Dendritic cell treated with granulocyte-macrophage colony-stimulating factor and Interleukin-4, amounts not matched to agents 40 ng/mL and 50 ng/mL, for 4 days (primary cell): ENCODE measurements at regions of chr1 and their contacts with region 1.

Region 1: GRCh38 chr1:155050560-155051341 is at the start of gene ADAM15:
- H3K4me3 Mint-ChIP-seq: peak within 1 kb of the TSS; percentile 87
- H3K27ac Mint-ChIP-seq: peak within 1 kb of the TSS; percentile 90
- H3K4me1 Mint-ChIP-seq: peaks cover 37% of the 10 kb centered on the region
- H3K27me3 Mint-ChIP-seq: peaks cover 3% of the 10 kb centered on the region

Region 2: GRCh38 chr1:154206196-154206595 is 844.6 kb before region 1 on chr1 and contains the start of gene CFAP141:
- intact Hi-C with region 1: no loop called
- H3K4me3 Mint-ChIP-seq: no peak within 1 kb of the TSS
- H3K27ac Mint-ChIP-seq: peak within 1 kb of the TSS; percentile 44
- H3K4me1 Mint-ChIP-seq: no peaks in the 10 kb centered on the region
- H3K27me3 Mint-ChIP-seq: no peaks in the 10 kb centered on the region

Region 3: DNA sequence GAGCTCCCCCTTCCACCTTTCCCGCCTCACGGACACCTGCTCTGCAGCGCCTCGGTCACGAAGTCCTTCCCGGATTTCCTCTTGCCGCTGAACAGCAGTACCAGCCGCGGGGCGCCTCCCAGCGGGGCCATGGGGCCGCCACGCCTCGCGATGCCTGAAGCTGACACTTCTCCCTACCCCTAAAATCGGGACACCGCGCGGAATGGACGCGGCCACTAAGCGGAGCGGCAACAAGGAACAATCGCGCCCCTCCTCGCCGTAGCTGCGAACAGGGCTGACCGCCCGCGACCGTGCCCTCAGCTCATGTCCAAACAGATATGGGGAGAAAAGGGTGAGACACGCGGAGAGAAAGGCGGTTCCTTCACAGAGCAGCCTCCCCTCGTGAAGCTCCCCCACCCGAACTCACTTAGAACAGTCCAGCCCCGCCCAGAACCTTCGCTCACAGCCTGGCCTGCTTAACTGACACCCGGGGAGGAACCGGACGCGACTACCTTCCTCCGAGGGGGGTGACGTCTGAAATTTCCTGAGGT is 114.1 kb before region 1 on chr1 and contains the start of gene PMVK:
- intact Hi-C with region 1: loop called (anchors 2 kb)
- H3K4me3 Mint-ChIP-seq: peak within 1 kb of the TSS; percentile 79
- H3K27ac Mint-ChIP-seq: peak within 1 kb of the TSS; percentile 88
- H3K4me1 Mint-ChIP-seq: peaks cover 54% of the 10 kb centered on the region
- H3K27me3 Mint-ChIP-seq: no peaks in the 10 kb centered on the region

Region 4: GRCh38 chr1:154974063-154974807 is 76.5 kb before region 1 on chr1 and contains the start of gene CKS1B:
- intact Hi-C with region 1: loop called (anchors 1 kb)
- H3K4me3 Mint-ChIP-seq: no peak within 1 kb of the TSS
- H3K27ac Mint-ChIP-seq: no peak within 1 kb of the TSS
- H3K4me1 Mint-ChIP-seq: no peaks in the 10 kb centered on the region
- H3K27me3 Mint-ChIP-seq: no peaks in the 10 kb centered on the region

Region 5: DNA sequence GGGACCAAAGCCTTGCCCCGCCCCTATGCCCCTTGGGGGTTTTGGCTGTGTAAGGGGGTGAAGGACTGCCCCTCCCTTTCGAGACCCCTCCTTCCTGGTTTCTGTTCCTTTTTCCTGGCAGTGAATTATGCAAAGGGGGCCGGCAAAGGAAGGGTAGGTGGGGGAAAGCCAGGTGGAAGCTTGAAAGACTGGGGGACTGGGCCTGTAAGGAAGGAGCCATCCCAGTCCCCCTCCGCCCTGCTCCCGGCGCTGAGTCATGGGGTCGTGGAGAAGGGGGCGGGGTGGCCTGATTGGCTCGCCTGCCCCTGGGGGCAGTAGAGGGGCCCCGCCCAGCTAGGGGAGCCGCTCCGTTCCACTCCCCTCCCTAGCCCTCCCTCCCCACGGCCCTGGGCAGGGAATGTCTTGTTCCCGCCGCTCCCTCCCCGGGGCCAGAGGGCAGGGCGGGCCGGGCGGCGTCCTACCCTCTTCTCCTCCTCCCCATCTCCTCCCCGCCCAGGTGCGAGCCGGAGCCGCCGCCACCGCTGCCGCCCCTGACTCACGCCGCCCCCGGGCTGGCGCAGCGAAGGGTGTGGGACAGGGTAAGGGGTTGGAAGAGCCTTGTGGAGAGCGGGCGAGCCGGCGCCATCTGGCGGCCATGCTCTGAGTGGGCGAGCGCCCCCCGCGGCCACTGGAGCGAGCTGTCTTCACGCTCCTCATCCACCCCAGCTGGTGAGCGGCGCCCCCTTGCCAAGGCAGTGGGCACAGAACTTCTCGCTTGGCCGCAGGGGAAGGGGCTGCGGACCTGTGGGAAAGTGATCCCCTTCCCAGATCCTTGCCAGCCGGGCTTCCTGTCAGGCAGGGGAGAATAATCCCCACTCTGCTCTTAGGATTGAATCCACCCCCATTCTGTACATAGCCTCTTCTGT is 33.5 kb before region 1 on chr1:
- intact Hi-C with region 1: loop called (anchors 5 kb)
- H3K4me3 Mint-ChIP-seq: peak overlapping the region; percentile 63
- H3K27ac Mint-ChIP-seq: peak overlapping the region; percentile 50
- H3K4me1 Mint-ChIP-seq: peaks cover 81% of the 10 kb centered on the region
- H3K27me3 Mint-ChIP-seq: no peaks in the 10 kb centered on the region